CD8-positive, alpha-beta T cell (primary cell): ENCODE measurements at regions of chr9 and their contacts with region 1.

Region 1: GRCh38 chr9:68779558-68780384 is 74.7 kb downstream of the PIP5K1B start:
- DNase-seq: peak; percentile 87 to 97 (median 94)
- ATAC-seq: peak; percentile 92
- H3K4me3 ChIP-seq: peak overlapping the region; percentile 67 to 80
- H3K4me3 Mint-ChIP-seq: no peak overlapping the region
- H3K27ac ChIP-seq: peak overlapping the region; percentile 91 to 92
- H3K27ac Mint-ChIP-seq: no peak overlapping the region
- H3K4me1 ChIP-seq: peaks cover 49% of the 10 kb centered on the region
- H3K4me1 Mint-ChIP-seq: peaks cover 8% of the 10 kb centered on the region
- H3K27me3 ChIP-seq: no peaks in the 10 kb centered on the region
- H3K27me3 Mint-ChIP-seq: peaks cover 4% of the 10 kb centered on the region
- CTCF ChIP-seq: peak; percentile 53

Region 2: DNA sequence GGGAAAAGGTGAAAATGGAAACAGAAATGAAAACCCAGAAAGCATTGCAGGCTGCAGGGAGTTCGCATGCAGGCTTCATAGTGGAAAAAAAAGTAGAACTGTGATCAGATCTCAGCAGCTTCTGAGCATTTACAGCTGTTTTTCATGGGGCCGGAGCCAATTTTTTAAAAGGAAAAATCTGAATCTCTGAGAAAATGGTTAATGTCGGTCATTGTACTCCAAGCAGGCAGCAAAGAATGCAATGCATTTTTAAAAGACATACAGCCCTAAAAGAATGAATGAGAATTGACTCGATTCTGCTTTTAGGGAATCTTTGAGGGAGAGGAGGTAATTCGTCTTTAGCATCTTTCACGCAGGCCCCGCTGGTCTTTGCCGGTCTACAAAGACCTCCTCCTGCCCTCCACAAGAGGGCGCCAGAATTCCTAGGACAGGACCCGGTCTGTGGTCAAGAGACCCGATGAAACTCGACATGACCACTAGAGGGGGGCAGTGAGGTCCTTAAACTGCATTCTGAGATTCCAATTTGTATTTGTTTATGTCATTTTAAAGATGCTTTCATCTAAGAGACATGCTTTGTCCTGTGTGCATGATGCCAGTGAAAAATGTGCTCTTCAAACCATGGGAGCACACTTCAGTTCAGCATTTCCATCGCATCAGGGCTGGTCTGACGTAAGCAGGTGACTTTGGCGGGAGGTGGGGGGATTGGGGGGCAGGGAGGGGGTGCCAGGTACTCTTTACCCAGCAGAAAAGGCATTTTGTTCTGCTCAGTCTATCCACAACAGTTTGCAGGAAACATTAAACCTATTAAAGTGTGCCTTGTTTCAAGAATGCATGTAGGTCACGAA is 195.4 kb before region 1 on chr9:
- CTCF ChIA-PET with region 1: no interaction called
- POLR2A ChIA-PET with region 1: no interaction called
- intact Hi-C with region 1: loop called in 1 of 2 experiments (anchors 1 kb)
- DNase-seq: peak; percentile 58 to 90 (median 77)
- ATAC-seq: peak; percentile 79
- H3K4me3 ChIP-seq: no peak overlapping the region
- H3K4me3 Mint-ChIP-seq: no peak overlapping the region
- H3K27ac ChIP-seq: no peak overlapping the region
- H3K27ac Mint-ChIP-seq: no peak overlapping the region
- H3K4me1 ChIP-seq: no peaks in the 10 kb centered on the region
- H3K4me1 Mint-ChIP-seq: peaks cover 2% of the 10 kb centered on the region
- H3K27me3 ChIP-seq: no peaks in the 10 kb centered on the region
- H3K27me3 Mint-ChIP-seq: peaks cover 8% of the 10 kb centered on the region
- CTCF ChIP-seq: peak; percentile 81

Region 3: DNA sequence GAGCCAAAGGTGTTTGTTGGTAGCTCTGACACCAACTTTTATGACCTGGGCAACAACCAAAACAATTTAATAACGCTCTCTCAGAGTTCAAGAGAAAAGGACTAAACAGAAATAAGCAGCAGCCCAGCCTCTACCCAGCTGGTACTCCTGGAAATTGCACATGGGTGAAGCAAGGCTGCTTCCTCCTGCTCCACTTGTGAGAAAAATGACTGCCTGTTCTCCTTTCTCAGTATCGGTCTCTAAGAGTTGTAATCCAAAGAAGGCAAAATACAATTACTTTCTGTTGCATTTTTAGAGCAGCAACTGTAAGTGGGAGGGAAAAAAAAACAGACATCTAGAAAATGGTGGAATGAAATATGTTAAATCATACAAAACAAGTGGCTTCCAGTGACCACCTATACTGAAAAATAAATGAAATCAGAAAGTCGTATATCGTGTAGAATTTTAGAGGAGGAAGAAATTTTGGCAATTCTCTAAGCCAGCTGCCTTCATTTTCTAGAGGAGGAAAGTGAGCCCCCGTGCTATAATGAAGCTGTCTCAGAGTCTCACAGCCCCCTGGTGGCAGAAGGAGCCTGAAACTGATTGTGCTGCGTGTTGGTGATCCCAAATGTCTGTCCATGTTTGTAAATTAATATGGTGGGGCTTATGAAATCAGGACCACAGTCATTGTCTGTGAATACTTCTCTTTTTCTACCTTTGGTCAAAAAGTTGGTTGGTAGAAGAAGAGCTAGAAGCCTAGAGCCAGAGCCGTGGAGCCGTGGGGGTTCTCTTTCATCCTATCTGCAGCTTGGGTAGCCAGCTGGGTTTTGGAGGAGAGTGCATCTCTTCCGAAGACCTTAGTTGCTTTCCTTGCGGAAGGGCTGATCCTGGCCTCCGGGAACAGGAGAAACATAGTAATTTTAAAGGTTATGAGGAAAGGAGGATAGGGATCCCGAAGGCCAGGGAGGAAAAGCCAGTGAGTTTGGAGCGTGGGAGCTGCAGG is 65.2 kb after region 1 on chr9:
- CTCF ChIA-PET with region 1: no interaction called
- POLR2A ChIA-PET with region 1: no interaction called
- intact Hi-C with region 1: loop called in 1 of 2 experiments (anchors 10 kb)
- DNase-seq: peak in 5 of 9 experiments; percentile 17 to 51 (median 25)
- ATAC-seq: no peak
- H3K4me3 ChIP-seq: no peak overlapping the region
- H3K4me3 Mint-ChIP-seq: no peak overlapping the region
- H3K27ac ChIP-seq: no peak overlapping the region
- H3K27ac Mint-ChIP-seq: no peak overlapping the region
- H3K4me1 ChIP-seq: no peaks in the 10 kb centered on the region
- H3K4me1 Mint-ChIP-seq: no peaks in the 10 kb centered on the region
- H3K27me3 ChIP-seq: no peaks in the 10 kb centered on the region
- H3K27me3 Mint-ChIP-seq: peaks cover 1% of the 10 kb centered on the region
- CTCF ChIP-seq: peak; percentile 15

Region 4: DNA sequence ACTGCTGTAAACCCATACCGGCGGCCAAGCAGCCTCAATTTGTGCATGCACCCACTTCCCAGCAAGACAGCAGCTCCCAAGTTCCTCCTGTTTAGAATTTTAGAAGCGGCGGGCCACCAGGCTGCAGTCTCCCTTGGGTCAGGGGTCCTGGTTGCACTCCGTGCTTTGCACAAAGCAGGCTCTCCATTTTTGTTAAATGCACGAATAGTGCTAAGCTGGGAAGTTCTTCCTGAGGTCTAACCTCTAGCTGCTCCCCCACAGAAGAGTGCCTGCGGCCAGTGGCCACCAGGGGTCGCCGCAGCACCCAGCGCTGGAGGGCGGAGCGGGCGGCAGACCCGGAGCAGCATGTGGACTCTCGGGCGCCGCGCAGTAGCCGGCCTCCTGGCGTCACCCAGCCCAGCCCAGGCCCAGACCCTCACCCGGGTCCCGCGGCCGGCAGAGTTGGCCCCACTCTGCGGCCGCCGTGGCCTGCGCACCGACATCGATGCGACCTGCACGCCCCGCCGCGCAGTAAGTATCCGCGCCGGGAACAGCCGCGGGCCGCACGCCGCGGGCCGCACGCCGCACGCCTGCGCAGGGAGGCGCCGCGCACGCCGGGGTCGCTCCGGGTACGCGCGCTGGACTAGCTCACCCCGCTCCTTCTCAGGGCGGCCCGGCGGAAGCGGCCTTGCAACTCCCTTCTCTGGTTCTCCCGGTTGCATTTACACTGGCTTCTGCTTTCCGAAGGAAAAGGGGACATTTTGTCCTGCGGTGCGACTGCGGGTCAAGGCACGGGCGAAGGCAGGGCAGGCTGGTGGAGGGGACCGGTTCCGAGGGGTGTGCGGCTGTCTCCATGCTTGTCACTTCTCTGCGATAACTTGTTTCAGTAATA is 255.9 kb after region 1 on chr9 and contains the start of gene FXN:
- CTCF ChIA-PET with region 1: no interaction called
- POLR2A ChIA-PET with region 1: no interaction called
- intact Hi-C with region 1: loop called (anchors 1 to 5 kb)
- DNase-seq: peak; percentile 64 to 90 (median 80)
- ATAC-seq: peak; percentile 87
- H3K4me3 ChIP-seq: peak within 1 kb of the TSS; percentile 51 to 81
- H3K4me3 Mint-ChIP-seq: peak within 1 kb of the TSS; percentile 97
- H3K27ac ChIP-seq: peak within 1 kb of the TSS; percentile 35 to 67
- H3K27ac Mint-ChIP-seq: peak within 1 kb of the TSS; percentile 92
- H3K4me1 ChIP-seq: peaks cover 14% of the 10 kb centered on the region
- H3K4me1 Mint-ChIP-seq: peaks cover 28% of the 10 kb centered on the region
- H3K27me3 ChIP-seq: no peaks in the 10 kb centered on the region
- H3K27me3 Mint-ChIP-seq: no peaks in the 10 kb centered on the region
- CTCF ChIP-seq: peak; percentile 96
- total RNA-seq, gene FXN: 9.7 to 13.1 TPM

Region 5: GRCh38 chr9:70258692-70259511 is 1479.1 kb after region 1 on chr9 and contains the start of gene SMC5:
- CTCF ChIA-PET with region 1: no interaction called
- POLR2A ChIA-PET with region 1: no interaction called
- intact Hi-C with region 1: loop called (anchors 5 kb)
- DNase-seq: peak; percentile 76 to 95 (median 87)
- ATAC-seq: peak; percentile 87
- H3K4me3 ChIP-seq: peak within 1 kb of the TSS; percentile 89 to 97
- H3K4me3 Mint-ChIP-seq: peak within 1 kb of the TSS; percentile 95
- H3K27ac ChIP-seq: peak within 1 kb of the TSS; percentile 85 to 94
- H3K27ac Mint-ChIP-seq: peak within 1 kb of the TSS; percentile 96
- H3K4me1 ChIP-seq: peaks cover 54% of the 10 kb centered on the region
- H3K4me1 Mint-ChIP-seq: peaks cover 66% of the 10 kb centered on the region
- H3K27me3 ChIP-seq: no peaks in the 10 kb centered on the region
- H3K27me3 Mint-ChIP-seq: no peaks in the 10 kb centered on the region
- CTCF ChIP-seq: no peak
- total RNA-seq, gene SMC5: 28.6 to 32.0 TPM